Mammary epithelial cell (primary cell): ENCODE measurements at regions of chr3 and their contacts with region 1.

Region 1: DNA sequence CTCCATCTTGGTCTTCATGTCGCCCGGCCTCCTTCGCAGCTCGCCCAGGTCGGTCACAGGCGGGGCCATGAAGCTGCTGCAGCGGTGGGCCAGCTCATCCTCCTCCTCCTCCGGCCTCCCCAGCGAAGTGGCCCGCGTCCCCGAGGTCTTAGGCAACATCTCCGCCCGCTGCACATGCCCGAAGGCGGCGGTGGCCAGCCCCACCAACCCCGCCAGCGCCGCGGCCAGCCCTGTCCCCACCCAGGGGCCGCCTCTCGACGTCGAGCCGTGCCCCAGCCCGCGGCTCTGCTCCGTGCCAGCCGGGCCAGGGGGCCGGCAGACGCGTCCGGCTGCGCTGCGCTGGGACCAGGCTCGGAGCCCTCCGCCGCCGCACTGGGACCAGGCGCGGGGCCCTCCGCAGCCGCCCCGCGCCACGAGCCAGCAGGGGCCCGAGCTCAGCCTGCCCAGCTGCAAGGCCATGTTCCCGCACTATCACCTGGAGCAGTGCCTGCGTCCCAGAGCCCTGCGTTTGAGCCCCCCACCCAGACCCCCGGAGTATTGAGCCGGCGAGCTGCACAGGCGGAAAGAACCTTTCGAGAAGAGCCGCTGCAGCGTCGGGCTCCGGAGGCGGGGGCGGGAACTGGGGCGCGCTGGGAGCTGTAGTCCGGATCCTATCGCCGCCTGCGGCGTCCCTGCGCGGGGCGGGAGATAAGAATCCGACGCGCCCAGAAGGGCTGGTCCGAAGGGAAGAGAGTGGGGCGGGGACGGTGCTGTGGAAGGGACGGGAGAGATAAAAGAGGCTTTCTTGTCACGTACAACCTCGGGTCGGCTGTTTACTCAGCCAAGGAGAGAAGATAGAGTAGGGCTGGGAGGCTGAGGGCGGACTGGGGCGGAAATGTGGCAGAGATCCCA is at the start of gene CPOX:
- DNase-seq: peak; percentile 93
- H3K4me3 ChIP-seq: peak within 1 kb of the TSS; percentile 62 to 94 (median 92)
- H3K27ac ChIP-seq: peak within 1 kb of the TSS; percentile 58
- H3K4me1 ChIP-seq: peaks cover 7% of the 10 kb centered on the region
- H3K27me3 ChIP-seq: no peaks in the 10 kb centered on the region
- CTCF ChIP-seq: no peak
- total RNA-seq, gene CPOX: 24.3 to 25.2 TPM

Region 2: DNA sequence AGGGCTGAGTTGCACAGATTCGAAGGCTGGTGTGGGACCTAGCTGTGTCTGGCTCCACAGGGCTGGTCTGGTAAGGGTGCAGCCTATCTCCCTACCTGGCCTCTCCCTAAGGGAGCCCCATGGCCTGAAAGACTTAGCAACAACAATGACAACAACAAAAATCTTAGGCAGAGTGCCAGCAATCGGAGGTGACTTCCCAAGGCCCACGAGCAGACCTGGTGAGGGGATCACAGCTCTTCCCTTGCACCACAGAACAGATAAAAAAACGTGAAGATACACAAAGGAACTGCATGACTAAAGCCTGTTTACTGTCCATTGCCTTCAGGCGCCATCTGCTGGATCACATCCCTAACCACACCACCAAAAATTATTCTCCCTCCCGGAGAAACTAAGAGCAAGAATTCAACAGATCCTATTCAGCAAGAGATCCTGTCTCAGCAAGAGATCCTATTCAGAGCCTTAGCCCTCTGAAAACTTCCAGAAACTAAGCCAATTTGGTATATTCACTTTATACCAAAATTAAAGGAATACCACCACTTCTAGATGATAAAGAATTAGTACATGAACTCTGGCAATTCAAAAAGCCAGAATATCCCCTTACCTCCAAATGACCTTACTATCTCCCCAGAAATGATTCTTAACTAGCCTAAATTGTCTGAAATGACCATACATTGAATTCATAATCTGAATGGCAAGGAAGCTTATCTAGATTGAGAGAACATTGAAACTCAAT is 263.7 kb before region 1 on chr3:
- CTCF ChIA-PET with region 1: no interaction called
- dilution Hi-C with region 1: no loop called
- in situ Hi-C with region 1: loop called in 1 of 2 experiments (anchors 25 kb)
- intact Hi-C with region 1: no loop called
- DNase-seq: peak; percentile 38
- H3K4me3 ChIP-seq: no peak overlapping the region
- H3K27ac ChIP-seq: no peak overlapping the region
- H3K4me1 ChIP-seq: no peaks in the 10 kb centered on the region
- H3K27me3 ChIP-seq: no peaks in the 10 kb centered on the region
- CTCF ChIP-seq: peak; percentile 69 to 83

Region 3: GRCh38 chr3:98522244-98523090 is 70.8 kb before region 1 on chr3 and contains the start of gene CLDND1:
- CTCF ChIA-PET with region 1: no interaction called
- dilution Hi-C with region 1: no loop called
- in situ Hi-C with region 1: no loop called
- intact Hi-C with region 1: loop called (anchors 5 kb)
- DNase-seq: peak; percentile 98
- H3K4me3 ChIP-seq: peak within 1 kb of the TSS; percentile 91 to 94 (median 93)
- H3K27ac ChIP-seq: peak within 1 kb of the TSS; percentile 97
- H3K4me1 ChIP-seq: peaks cover 16% of the 10 kb centered on the region
- H3K27me3 ChIP-seq: no peaks in the 10 kb centered on the region
- CTCF ChIP-seq: no peak
- total RNA-seq, gene CLDND1: 76.9 to 90.0 TPM

Region 4: GRCh38 chr3:98645039-98645438 is 51.7 kb after region 1 on chr3:
- CTCF ChIA-PET with region 1: no interaction called
- dilution Hi-C with region 1: no loop called
- in situ Hi-C with region 1: no loop called
- intact Hi-C with region 1: no loop called
- DNase-seq: peak; percentile 67
- H3K4me3 ChIP-seq: no peak overlapping the region
- H3K27ac ChIP-seq: no peak overlapping the region
- H3K4me1 ChIP-seq: no peaks in the 10 kb centered on the region
- H3K27me3 ChIP-seq: peaks cover 3% of the 10 kb centered on the region
- CTCF ChIP-seq: no peak

Region 5: DNA sequence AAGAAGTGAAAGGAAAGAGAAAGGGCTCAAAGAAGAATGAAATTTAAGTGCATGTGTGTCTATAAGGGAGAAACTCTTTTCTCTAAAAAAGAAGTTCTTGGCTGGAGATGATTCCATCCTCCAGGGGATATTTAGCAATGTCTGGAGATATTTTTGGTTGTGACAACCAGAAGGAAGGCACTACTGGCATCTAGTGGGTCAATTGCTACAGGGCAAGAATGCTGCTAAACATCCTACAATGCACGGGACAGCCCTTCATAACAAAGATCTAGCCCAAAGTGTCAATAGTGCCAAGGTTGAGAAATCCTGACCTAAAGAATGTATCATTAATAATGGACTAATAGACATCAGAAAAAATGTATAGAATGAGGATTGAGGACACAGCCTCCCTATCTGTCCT is 112.4 kb after region 1 on chr3:
- CTCF ChIA-PET with region 1: no interaction called
- dilution Hi-C with region 1: no loop called
- in situ Hi-C with region 1: loop called in 1 of 2 experiments (anchors 10 kb)
- intact Hi-C with region 1: loop called (anchors 1 kb)
- DNase-seq: no peak
- H3K4me3 ChIP-seq: no peak overlapping the region
- H3K27ac ChIP-seq: no peak overlapping the region
- H3K4me1 ChIP-seq: no peaks in the 10 kb centered on the region
- H3K27me3 ChIP-seq: no peaks in the 10 kb centered on the region
- CTCF ChIP-seq: peak; percentile 28 to 59

Region 6: DNA sequence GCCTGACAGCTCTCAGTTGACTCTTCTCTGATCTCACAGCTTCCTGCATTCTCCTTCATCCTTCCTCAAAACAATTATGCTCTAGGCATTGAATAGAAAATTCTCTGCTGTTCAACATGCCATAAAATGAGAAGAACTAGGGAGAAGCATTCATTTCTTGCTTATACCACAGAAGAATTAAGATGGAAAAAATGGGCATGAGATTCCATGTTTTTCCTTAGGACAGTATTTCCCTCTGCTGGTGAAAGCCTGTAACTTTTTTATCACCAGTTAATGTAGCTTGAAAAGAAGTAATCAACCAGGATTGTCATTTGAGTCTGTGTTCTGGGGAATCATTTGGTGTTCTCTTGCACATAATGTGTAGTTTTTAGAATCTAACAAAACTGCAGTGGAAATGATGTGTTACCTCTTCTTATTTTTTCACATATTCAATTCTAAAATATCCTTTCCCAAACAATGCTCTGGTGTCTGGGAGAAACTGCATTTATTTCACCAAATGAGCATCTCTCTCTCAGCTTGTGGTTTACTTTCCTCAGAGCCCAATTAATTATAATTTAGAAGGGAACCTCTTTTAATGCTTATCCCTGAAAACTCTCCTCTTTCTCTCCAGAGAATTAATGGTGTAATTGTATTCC is 401.0 kb after region 1 on chr3:
- CTCF ChIA-PET with region 1: no interaction called
- dilution Hi-C with region 1: no loop called
- in situ Hi-C with region 1: loop called (anchors 10 kb)
- intact Hi-C with region 1: no loop called
- DNase-seq: peak; percentile 39
- H3K4me3 ChIP-seq: no peak overlapping the region
- H3K27ac ChIP-seq: no peak overlapping the region
- H3K4me1 ChIP-seq: peaks cover 4% of the 10 kb centered on the region
- H3K27me3 ChIP-seq: no peaks in the 10 kb centered on the region
- CTCF ChIP-seq: peak; percentile 59 to 68